Endothelial cell of umbilical vein (primary cell): ENCODE measurements at regions of chr5 and their contacts with region 1.

Region 1: GRCh38 chr5:40464511-40464910 is 215.2 kb upstream of the PTGER4 start:
- DNase-seq: peak; percentile 59
- H3K4me3 ChIP-seq: no peak overlapping the region
- H3K27ac ChIP-seq: no peak overlapping the region
- H3K4me1 ChIP-seq: peaks cover 21% of the 10 kb centered on the region
- H3K27me3 ChIP-seq: no peaks in the 10 kb centered on the region
- CTCF ChIP-seq: no peak
- POLR2A ChIP-seq: no peak

Region 2: DNA sequence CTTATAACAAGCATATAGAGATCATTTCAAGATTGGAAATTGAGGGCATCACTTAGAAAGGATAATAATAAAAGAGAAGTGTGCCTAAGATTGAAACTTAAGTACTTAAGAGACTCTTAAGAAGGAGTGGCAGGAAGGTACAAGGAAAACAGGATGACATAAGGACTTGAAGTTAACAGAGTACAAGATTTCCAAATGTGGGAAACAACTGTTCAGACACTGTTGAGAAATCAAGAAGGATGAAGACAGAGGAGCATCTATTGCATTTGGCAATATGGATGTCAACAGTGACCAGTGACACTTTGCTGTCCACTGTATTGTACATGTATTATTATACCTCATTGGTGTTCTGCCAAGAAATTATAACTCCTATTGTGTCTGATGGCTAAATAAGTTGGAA is 57.4 kb after region 1 on chr5:
- CTCF ChIA-PET with region 1: interaction called, 3 read pairs
- POLR2A ChIA-PET with region 1: no interaction called
- dilution Hi-C with region 1: no loop called
- intact Hi-C with region 1: loop called (anchors 5 kb)
- DNase-seq: no peak
- H3K4me3 ChIP-seq: peak overlapping the region in 2 of 3 experiments; percentile 17 to 23
- H3K27ac ChIP-seq: no peak overlapping the region
- H3K4me1 ChIP-seq: peaks cover 9% of the 10 kb centered on the region
- H3K27me3 ChIP-seq: peaks cover 2 to 27% of the 10 kb centered on the region in 2 experiments
- CTCF ChIP-seq: no peak
- POLR2A ChIP-seq: no peak